HCT116 (cell line): ENCODE measurements at regions of chr13 and their contacts with region 1.

Region 1: DNA sequence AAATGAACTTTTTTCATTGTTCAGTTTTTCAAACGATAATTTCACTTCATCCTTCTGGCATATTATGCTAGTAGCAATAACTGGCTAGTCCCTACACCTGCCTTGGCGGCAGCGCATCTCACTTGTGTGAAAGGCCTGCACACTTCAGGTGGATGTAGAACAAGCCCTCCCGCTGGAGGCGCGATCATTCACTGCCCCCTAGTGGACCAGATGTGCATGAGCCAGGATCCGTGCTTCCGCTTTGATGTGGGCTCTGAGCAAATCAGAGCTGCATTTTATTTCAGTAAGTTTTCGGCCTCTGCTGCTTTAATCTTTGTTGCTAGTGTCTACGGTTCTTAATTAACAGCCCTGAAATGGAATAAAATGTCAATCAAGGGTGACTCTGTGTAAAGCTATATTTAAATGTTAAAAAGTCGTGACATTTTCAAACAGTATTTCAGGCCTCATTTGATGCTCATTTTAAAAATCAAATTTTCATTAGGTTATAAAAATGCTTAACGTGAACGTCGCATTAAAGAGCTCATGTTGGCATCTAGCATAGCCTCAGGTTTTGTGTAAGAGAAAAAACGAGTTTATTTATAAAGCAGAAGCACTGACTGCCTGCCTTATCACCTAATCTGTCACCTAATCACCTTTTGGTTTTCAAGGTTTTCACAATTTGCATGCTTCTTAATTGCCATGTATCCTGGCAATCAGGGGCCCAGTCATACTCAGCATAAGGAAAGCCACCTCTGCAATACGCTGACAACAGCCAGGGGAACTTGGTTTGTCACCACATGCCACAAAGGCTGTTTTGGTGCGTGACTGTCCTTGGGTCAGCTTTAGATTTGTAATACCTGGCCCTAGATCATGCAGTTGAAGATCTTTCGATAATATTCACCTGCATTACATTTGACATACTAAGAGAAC is 112.2 kb downstream of the TEX26 start:
- DNase-seq: peak; percentile 78
- ATAC-seq: peak; percentile 75
- H3K4me3 ChIP-seq: peak overlapping the region in 1 of 2 experiments; percentile 56; a peak in 3 of 4 replicates
- H3K27ac ChIP-seq: peak overlapping the region; percentile 98
- H3K4me1 ChIP-seq: peaks cover 28 to 55% of the 10 kb centered on the region in 2 experiments
- H3K27me3 ChIP-seq: no peaks in the 10 kb centered on the region
- CTCF ChIP-seq: peak in 2 of 3 experiments; percentile 95 to 97; a peak in 4 of 6 replicates
- POLR2A ChIP-seq: no peak
- RAD21 ChIP-seq: no peak

Region 2: DNA sequence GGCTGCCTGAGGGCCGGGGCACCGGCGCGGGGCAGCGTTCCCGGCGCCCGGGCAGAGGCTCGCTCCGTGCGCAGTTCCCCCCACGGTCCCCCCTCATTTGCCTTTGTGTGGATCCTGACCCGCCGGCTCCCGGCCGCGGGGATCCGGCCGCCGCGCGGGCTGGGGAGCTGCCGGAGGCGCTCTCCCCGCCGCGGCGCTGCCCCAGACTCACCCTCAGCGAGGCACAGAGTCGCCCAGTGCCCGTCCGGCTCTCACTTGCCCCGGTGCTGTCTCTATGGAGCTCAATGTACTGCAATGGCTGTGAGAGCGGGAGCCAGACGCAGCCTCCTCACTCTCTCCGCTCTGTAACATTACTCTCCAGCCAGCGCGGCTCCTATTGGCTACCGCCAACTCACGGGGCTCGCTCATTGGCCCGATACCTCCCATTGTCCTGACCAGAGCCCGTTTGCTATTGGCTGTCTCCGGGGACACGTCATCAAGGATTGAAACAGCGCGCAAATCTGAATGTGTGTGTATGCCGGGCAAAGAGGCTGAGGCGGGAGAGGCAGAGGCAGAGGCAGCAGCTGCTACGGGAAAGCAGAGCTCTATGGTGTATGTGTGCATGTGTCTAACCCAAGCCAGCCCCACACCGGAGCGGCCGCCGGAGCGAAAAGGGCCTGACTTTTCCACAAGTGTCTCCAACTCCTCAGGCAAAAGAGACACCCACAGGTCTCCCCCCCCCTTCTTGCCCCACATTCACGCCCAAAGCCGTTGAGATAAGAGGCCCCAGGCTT is 578.9 kb before region 1 on chr13 and contains the start of gene HMGB1:
- CTCF ChIA-PET with region 1: interaction called, 3 read pairs
- POLR2A ChIA-PET with region 1: no interaction called
- RAD21 ChIA-PET with region 1: no interaction called
- intact Hi-C with region 1: loop called (anchors 10 kb)
- DNase-seq: peak; percentile 98
- ATAC-seq: peak; percentile 90
- H3K4me3 ChIP-seq: peak within 1 kb of the TSS; percentile 73 to 80
- H3K27ac ChIP-seq: peak within 1 kb of the TSS; percentile 99
- H3K4me1 ChIP-seq: peaks cover 11 to 32% of the 10 kb centered on the region in 2 experiments; a peak in 3 of 4 replicates
- H3K27me3 ChIP-seq: no peaks in the 10 kb centered on the region
- CTCF ChIP-seq: no peak
- POLR2A ChIP-seq: peak; percentile 77
- RAD21 ChIP-seq: no peak
- total RNA-seq, gene HMGB1: 678 TPM

Region 3: GRCh38 chr13:30617315-30618185 is 427.1 kb before region 1 on chr13 and contains the start of gene USPL1:
- CTCF ChIA-PET with region 1: no interaction called
- POLR2A ChIA-PET with region 1: no interaction called
- RAD21 ChIA-PET with region 1: no interaction called
- intact Hi-C with region 1: loop called (anchors 10 kb)
- DNase-seq: peak; percentile 98
- ATAC-seq: peak; percentile 91
- H3K4me3 ChIP-seq: peak within 1 kb of the TSS; percentile 92
- H3K27ac ChIP-seq: peak within 1 kb of the TSS; percentile 97
- H3K4me1 ChIP-seq: peaks cover 18 to 36% of the 10 kb centered on the region in 2 experiments
- H3K27me3 ChIP-seq: no peaks in the 10 kb centered on the region
- CTCF ChIP-seq: no peak
- POLR2A ChIP-seq: peak; percentile 58
- RAD21 ChIP-seq: no peak
- total RNA-seq, gene USPL1: 19.7 TPM

Region 4: GRCh38 chr13:30673669-30674521 is 370.7 kb before region 1 on chr13:
- CTCF ChIA-PET with region 1: no interaction called
- POLR2A ChIA-PET with region 1: no interaction called
- RAD21 ChIA-PET with region 1: no interaction called
- intact Hi-C with region 1: loop called (anchors 10 kb)
- DNase-seq: peak; percentile 59
- ATAC-seq: peak; percentile 92
- H3K4me3 ChIP-seq: peak overlapping the region; percentile 13 to 44; a peak in 3 of 4 replicates
- H3K27ac ChIP-seq: peak overlapping the region; percentile 1; the same call in 1 of the 2 replicates
- H3K4me1 ChIP-seq: peaks cover 0 to 15% of the 10 kb centered on the region in 2 experiments; a peak in 2 of 4 replicates
- H3K27me3 ChIP-seq: no peaks in the 10 kb centered on the region
- CTCF ChIP-seq: peak in 2 of 3 experiments; percentile 58 to 64; a peak in 4 of 6 replicates
- POLR2A ChIP-seq: peak; percentile 37
- RAD21 ChIP-seq: no peak

Region 5: DNA sequence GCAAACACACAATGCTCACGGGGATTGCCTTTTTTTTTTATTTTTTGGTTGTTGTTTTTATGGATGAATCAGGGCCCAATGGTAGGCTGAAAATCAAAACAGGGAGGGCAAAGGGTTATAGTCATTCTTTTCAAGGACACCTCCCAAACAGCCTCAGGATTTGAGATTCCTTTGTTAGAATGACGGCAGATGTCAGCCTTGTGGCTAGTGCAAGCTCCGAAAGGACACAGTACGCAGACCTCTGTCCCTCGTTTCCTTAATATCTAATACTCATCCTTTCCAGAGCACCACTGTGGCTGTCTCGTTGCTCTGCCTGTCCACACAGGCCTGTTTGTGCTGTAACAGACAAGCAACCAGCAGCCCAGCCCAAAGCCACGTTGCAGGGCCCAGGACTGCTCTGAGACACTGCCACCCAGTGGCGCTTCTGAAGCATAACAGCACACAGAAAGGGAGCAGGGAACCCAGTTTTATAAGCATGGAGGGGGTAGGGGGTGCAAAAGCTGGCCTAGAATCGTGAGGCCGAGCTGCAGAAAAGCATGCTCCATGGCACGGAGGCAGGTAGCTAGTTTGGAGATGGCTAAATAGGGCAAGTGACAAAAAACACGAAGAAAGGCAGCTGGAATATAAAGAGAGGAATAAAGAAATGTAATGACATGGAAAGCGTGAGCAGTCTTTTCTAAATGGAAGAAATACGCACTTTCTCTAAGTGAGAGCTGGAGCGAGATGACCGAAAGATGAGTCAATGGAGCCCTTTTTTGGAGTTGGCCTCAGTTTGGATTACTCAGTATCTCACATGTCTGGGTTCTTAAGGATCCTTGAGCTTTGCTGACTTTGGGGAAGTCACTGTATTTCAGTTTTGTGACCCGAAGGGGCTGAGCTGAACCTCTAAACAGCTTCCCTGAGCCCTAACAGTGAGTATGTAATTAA is 179.2 kb before region 1 on chr13:
- CTCF ChIA-PET with region 1: interaction called, 3 read pairs
- POLR2A ChIA-PET with region 1: no interaction called
- RAD21 ChIA-PET with region 1: interaction called, 4 read pairs
- intact Hi-C with region 1: loop called (anchors 10 kb)
- DNase-seq: peak; percentile 78
- ATAC-seq: peak; percentile 93
- H3K4me3 ChIP-seq: no peak overlapping the region
- H3K27ac ChIP-seq: peak overlapping the region; percentile 23; the same call in 1 of the 2 replicates
- H3K4me1 ChIP-seq: peaks cover 15 to 30% of the 10 kb centered on the region in 2 experiments
- H3K27me3 ChIP-seq: no peaks in the 10 kb centered on the region
- CTCF ChIP-seq: peak; percentile 82 to 97 (median 93)
- POLR2A ChIP-seq: no peak
- RAD21 ChIP-seq: peak; percentile 95

Region 6: GRCh38 chr13:30978981-30979956 is 65.4 kb before region 1 on chr13:
- CTCF ChIA-PET with region 1: interaction called, 25 read pairs
- POLR2A ChIA-PET with region 1: no interaction called
- RAD21 ChIA-PET with region 1: no interaction called
- intact Hi-C with region 1: loop called (anchors 5 kb)
- DNase-seq: peak; percentile 38
- ATAC-seq: peak; percentile 81
- H3K4me3 ChIP-seq: no peak overlapping the region; a peak in 1 of 4 replicates
- H3K27ac ChIP-seq: peak overlapping the region; percentile 1; the same call in 1 of the 2 replicates
- H3K4me1 ChIP-seq: peaks cover 18 to 25% of the 10 kb centered on the region in 2 experiments
- H3K27me3 ChIP-seq: no peaks in the 10 kb centered on the region
- CTCF ChIP-seq: peak; percentile 46 to 96 (median 95); a peak in 5 of 6 replicates
- POLR2A ChIP-seq: no peak
- RAD21 ChIP-seq: peak; percentile 60

Region 7: GRCh38 chr13:31161828-31162590 is 117.4 kb after region 1 on chr13 and contains the start of gene HSPH1:
- CTCF ChIA-PET with region 1: no interaction called
- POLR2A ChIA-PET with region 1: no interaction called
- RAD21 ChIA-PET with region 1: no interaction called
- intact Hi-C with region 1: loop called (anchors 5 kb)
- DNase-seq: peak; percentile 96
- ATAC-seq: peak; percentile 92
- H3K4me3 ChIP-seq: peak within 1 kb of the TSS; percentile 87 to 88
- H3K27ac ChIP-seq: peak within 1 kb of the TSS; percentile 97
- H3K4me1 ChIP-seq: peaks cover 13 to 28% of the 10 kb centered on the region in 2 experiments
- H3K27me3 ChIP-seq: no peaks in the 10 kb centered on the region
- CTCF ChIP-seq: no peak
- POLR2A ChIP-seq: peak; percentile 75
- RAD21 ChIP-seq: no peak
- total RNA-seq, gene HSPH1: 116 TPM